Activated CD4-positive, alpha-beta T cell treated with anti-CD3 and anti-CD28 coated beads for 36 hours (primary cell): ENCODE measurements at regions of chr16 and their contacts with region 1.

Region 1: GRCh38 chr16:85673529-85674417 is 15.0 kb downstream of the GINS2 start:
- DNase-seq: no peak
- ATAC-seq: no peak
- H3K4me3 Mint-ChIP-seq: no peak overlapping the region
- H3K27ac Mint-ChIP-seq: no peak overlapping the region
- H3K4me1 Mint-ChIP-seq: peaks cover 7% of the 10 kb centered on the region
- H3K27me3 Mint-ChIP-seq: no peaks in the 10 kb centered on the region

Region 2: DNA sequence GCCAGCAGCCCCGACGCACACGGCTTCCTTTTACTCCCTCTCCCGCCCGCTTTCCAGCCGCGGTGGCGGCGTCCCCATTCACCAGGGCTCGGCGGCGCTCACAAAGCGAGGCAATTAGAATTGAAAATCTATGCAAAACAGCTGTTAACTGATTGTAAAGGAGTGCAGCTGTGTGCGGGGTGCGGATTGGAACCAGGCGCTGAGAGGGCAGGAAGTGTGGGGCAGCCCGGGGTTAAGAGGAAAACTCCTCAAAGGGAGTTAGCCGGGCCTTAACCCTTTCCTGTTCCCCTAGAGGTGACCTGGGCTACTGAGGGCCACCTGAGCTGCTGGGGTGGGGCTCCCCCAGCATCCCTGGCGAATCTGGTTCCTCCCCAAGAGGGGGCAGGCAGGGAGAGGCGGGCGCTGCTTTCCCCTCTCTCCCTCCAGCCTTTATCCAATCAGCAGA is 66.4 kb before region 1 on chr16:
- CTCF ChIA-PET with region 1: no interaction called
- POLR2A ChIA-PET with region 1: no interaction called
- intact Hi-C with region 1: no loop called
- DNase-seq: peak; percentile 20
- ATAC-seq: no peak
- H3K4me3 Mint-ChIP-seq: no peak overlapping the region
- H3K27ac Mint-ChIP-seq: no peak overlapping the region
- H3K4me1 Mint-ChIP-seq: peaks cover 16% of the 10 kb centered on the region
- H3K27me3 Mint-ChIP-seq: peaks cover 7% of the 10 kb centered on the region

Region 3: DNA sequence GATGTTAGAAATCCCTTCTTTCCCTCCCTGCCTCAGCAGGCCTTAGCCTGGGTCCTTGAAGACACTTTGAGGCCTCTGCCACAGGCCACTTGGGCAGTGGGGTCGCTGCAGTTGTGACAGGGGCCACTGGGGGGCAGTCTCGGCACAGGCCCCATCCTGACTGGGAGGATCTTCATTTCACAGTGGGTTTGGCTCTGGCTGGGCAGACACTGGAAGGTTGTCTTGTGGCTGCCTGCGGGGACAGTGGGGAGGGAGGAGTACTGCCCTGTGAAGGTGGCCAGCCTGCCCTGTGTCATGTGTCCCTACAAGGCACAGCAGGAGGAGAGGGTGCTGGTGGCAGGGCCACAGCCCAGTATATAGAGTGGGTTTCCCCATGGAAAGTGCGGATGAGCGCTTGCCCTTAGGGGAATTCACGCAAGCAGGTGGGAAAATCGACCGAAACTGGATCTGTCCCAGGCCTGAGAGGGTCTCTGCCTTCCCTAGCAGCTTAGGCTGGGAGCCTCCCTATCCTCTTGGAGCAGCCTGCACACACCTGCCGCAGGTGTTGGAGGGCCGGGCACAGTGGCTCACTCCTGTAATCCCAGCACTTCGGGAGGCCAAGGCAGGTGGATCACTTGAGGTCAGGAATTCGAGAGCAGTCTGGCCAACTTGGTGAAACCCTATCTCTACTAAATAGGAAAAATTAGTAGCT is 13.8 kb before region 1 on chr16:
- CTCF ChIA-PET with region 1: interaction called, 10 read pairs
- POLR2A ChIA-PET with region 1: no interaction called
- intact Hi-C with region 1: no loop called
- DNase-seq: peak; percentile 82
- ATAC-seq: peak; percentile 85
- H3K4me3 Mint-ChIP-seq: no peak overlapping the region
- H3K27ac Mint-ChIP-seq: no peak overlapping the region
- H3K4me1 Mint-ChIP-seq: no peaks in the 10 kb centered on the region
- H3K27me3 Mint-ChIP-seq: no peaks in the 10 kb centered on the region